CD8-positive, alpha-beta T cell (primary cell): ENCODE measurements at regions of chr3 and their contacts with region 1.

Region 1: DNA sequence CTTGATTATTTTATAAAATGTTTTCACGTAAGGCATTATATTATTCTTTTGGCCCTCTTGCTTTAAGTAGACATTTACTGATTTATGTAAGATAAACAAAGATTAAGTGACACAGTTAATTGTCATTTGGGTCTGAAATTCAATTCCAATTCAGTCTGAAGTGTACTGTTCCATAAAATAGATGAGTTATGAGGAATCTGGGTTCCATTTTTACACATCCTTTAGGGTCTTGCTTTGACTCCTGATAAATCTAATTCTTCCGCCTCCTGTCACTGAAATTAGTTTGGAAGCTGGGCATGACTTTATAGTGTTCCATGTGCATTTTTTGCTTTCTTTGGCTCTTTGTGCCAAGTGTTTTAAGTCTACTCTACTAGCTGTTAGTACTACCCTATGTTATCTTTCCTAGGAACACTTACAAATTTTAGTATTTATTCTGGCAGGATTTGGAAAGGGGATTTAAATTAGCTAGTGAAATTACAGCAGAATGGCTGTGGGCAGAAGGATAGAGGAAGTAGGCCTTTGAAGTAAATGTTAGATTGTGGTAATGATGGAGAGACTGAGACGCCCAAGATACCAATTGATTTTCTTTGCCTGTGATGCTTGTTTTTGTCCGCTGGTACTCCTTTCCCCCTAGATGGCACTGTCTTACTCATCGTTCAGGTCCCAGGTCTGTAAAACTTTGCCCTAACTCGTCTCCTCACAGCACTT is 14.3 kb downstream of the ARL8B start:
- DNase-seq: peak in 6 of 9 experiments; percentile 15 to 77 (median 34)
- ATAC-seq: peak; percentile 94
- H3K4me3 ChIP-seq: no peak overlapping the region
- H3K4me3 Mint-ChIP-seq: no peak overlapping the region
- H3K27ac ChIP-seq: peak overlapping the region in 1 of 2 experiments; percentile 47
- H3K27ac Mint-ChIP-seq: peak overlapping the region; percentile 4
- H3K4me1 ChIP-seq: peaks cover 21% of the 10 kb centered on the region
- H3K4me1 Mint-ChIP-seq: peaks cover 76% of the 10 kb centered on the region
- H3K27me3 ChIP-seq: no peaks in the 10 kb centered on the region
- H3K27me3 Mint-ChIP-seq: no peaks in the 10 kb centered on the region
- CTCF ChIP-seq: peak; percentile 70

Region 2: GRCh38 chr3:5092018-5092417 is 44.3 kb before region 1 on chr3:
- CTCF ChIA-PET with region 1: no interaction called
- POLR2A ChIA-PET with region 1: no interaction called
- intact Hi-C with region 1: no loop called
- DNase-seq: no peak
- ATAC-seq: no peak
- H3K4me3 ChIP-seq: no peak overlapping the region
- H3K4me3 Mint-ChIP-seq: no peak overlapping the region
- H3K27ac ChIP-seq: no peak overlapping the region
- H3K27ac Mint-ChIP-seq: no peak overlapping the region
- H3K4me1 ChIP-seq: no peaks in the 10 kb centered on the region
- H3K4me1 Mint-ChIP-seq: peaks cover 5% of the 10 kb centered on the region
- H3K27me3 ChIP-seq: peaks cover 0 to 11% of the 10 kb centered on the region in 2 experiments
- H3K27me3 Mint-ChIP-seq: peaks cover 21% of the 10 kb centered on the region
- CTCF ChIP-seq: no peak

Region 3: DNA sequence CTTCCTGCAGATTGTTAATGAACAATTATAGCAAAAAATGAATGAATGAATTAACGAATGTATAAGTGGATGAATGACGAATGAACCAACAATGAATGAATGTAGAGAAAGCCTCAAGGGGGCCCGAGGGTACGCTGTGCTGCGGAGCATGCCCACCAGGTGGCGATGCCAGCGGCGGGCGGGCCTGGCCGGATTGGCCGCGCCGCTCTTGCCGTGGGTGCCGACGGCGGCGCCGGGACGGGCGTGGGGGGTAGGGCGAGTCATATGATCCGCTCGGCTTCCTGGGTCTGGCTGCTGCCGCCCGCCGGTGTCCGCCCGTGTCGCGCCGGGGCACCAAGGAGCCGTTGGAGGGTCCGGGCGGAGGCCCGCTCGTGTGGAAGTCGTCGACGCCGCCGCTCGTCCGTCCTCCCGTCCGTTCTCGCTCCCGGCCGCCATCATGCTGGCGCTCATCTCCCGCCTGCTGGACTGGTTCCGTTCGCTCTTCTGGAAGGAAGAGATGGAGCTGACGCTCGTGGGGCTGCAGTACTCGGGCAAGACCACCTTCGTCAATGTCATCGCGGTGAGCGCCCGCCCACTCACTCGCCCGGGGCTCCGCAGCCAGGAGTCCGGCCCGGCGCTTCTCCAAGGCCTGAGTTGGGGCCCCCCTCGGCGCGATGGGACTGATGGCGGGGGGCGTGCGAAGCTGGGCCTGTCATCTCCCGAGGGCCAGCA is 14.2 kb before region 1 on chr3 and contains the start of gene ARL8B:
- CTCF ChIA-PET with region 1: interaction called, 12 read pairs
- POLR2A ChIA-PET with region 1: no interaction called
- intact Hi-C with region 1: loop called in 1 of 2 experiments (anchors 1 kb)
- DNase-seq: peak; percentile 80 to 95 (median 91)
- ATAC-seq: peak; percentile 98
- H3K4me3 ChIP-seq: peak within 1 kb of the TSS; percentile 91 to 98
- H3K4me3 Mint-ChIP-seq: peak within 1 kb of the TSS; percentile 81
- H3K27ac ChIP-seq: peak within 1 kb of the TSS; percentile 87 to 92
- H3K27ac Mint-ChIP-seq: peak within 1 kb of the TSS; percentile 81
- H3K4me1 ChIP-seq: peaks cover 31% of the 10 kb centered on the region
- H3K4me1 Mint-ChIP-seq: peaks cover 38% of the 10 kb centered on the region
- H3K27me3 ChIP-seq: no peaks in the 10 kb centered on the region
- H3K27me3 Mint-ChIP-seq: no peaks in the 10 kb centered on the region
- CTCF ChIP-seq: peak; percentile 92
- total RNA-seq, gene ARL8B: 54.1 to 61.7 TPM

Region 4: GRCh38 chr3:5170975-5171374 is 34.6 kb after region 1 on chr3:
- CTCF ChIA-PET with region 1: interaction called, 5 read pairs
- POLR2A ChIA-PET with region 1: no interaction called
- intact Hi-C with region 1: loop called in 1 of 2 experiments (anchors 5 kb)
- DNase-seq: no peak
- ATAC-seq: no peak
- H3K4me3 ChIP-seq: no peak overlapping the region
- H3K4me3 Mint-ChIP-seq: no peak overlapping the region
- H3K27ac ChIP-seq: no peak overlapping the region
- H3K27ac Mint-ChIP-seq: no peak overlapping the region
- H3K4me1 ChIP-seq: no peaks in the 10 kb centered on the region
- H3K4me1 Mint-ChIP-seq: peaks cover 26% of the 10 kb centered on the region
- H3K27me3 ChIP-seq: no peaks in the 10 kb centered on the region
- H3K27me3 Mint-ChIP-seq: no peaks in the 10 kb centered on the region
- CTCF ChIP-seq: no peak

Region 5: GRCh38 chr3:5187156-5187919 is 51.0 kb after region 1 on chr3 and contains the start of gene EDEM1:
- CTCF ChIA-PET with region 1: interaction called, 5 read pairs
- POLR2A ChIA-PET with region 1: no interaction called
- intact Hi-C with region 1: loop called in 1 of 2 experiments (anchors 5 kb)
- DNase-seq: peak; percentile 85 to 98 (median 93)
- ATAC-seq: peak; percentile 82
- H3K4me3 ChIP-seq: peak within 1 kb of the TSS; percentile 84 to 92
- H3K4me3 Mint-ChIP-seq: peak within 1 kb of the TSS; percentile 100
- H3K27ac ChIP-seq: peak within 1 kb of the TSS; percentile 89 to 95
- H3K27ac Mint-ChIP-seq: peak within 1 kb of the TSS; percentile 100
- H3K4me1 ChIP-seq: peaks cover 27% of the 10 kb centered on the region
- H3K4me1 Mint-ChIP-seq: peaks cover 42% of the 10 kb centered on the region
- H3K27me3 ChIP-seq: no peaks in the 10 kb centered on the region
- H3K27me3 Mint-ChIP-seq: no peaks in the 10 kb centered on the region
- CTCF ChIP-seq: no peak
- total RNA-seq, gene EDEM1: 73.0 to 88.9 TPM

Region 6: GRCh38 chr3:5202222-5202621 is 65.9 kb after region 1 on chr3:
- CTCF ChIA-PET with region 1: interaction called, 4 read pairs
- POLR2A ChIA-PET with region 1: no interaction called
- intact Hi-C with region 1: loop called in 1 of 2 experiments (anchors 2 kb)
- DNase-seq: no peak
- ATAC-seq: no peak
- H3K4me3 ChIP-seq: no peak overlapping the region
- H3K4me3 Mint-ChIP-seq: no peak overlapping the region
- H3K27ac ChIP-seq: no peak overlapping the region
- H3K27ac Mint-ChIP-seq: peak overlapping the region; percentile 27
- H3K4me1 ChIP-seq: peaks cover 32% of the 10 kb centered on the region
- H3K4me1 Mint-ChIP-seq: peaks cover 35% of the 10 kb centered on the region
- H3K27me3 ChIP-seq: no peaks in the 10 kb centered on the region
- H3K27me3 Mint-ChIP-seq: no peaks in the 10 kb centered on the region
- CTCF ChIP-seq: no peak

Region 7: DNA sequence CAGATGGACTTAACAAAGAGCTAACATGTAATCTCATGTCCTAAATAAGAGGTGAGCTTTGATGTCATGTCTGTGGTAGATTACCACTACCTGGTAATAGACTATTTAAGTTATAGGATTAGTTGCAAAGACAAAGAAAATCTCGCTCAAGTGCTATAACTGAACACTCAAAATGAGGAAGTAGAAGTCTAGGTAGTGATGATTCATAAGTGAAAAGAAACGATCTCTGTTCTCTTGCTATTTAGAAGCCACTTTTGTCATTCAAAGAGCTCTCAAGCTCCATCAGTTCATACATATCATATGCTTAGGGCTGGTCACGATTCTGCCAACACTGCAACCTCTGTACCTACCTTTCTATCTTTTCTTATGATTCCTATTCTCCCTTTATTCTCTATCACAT is 162.1 kb after region 1 on chr3:
- CTCF ChIA-PET with region 1: interaction called, 4 read pairs
- POLR2A ChIA-PET with region 1: no interaction called
- intact Hi-C with region 1: loop called in 1 of 2 experiments (anchors 10 kb)
- DNase-seq: no peak
- ATAC-seq: no peak
- H3K4me3 ChIP-seq: no peak overlapping the region
- H3K4me3 Mint-ChIP-seq: no peak overlapping the region
- H3K27ac ChIP-seq: no peak overlapping the region
- H3K27ac Mint-ChIP-seq: no peak overlapping the region
- H3K4me1 ChIP-seq: no peaks in the 10 kb centered on the region
- H3K4me1 Mint-ChIP-seq: peaks cover 3% of the 10 kb centered on the region
- H3K27me3 ChIP-seq: no peaks in the 10 kb centered on the region
- H3K27me3 Mint-ChIP-seq: peaks cover under 1% of the 10 kb centered on the region
- CTCF ChIP-seq: no peak

Region 8: DNA sequence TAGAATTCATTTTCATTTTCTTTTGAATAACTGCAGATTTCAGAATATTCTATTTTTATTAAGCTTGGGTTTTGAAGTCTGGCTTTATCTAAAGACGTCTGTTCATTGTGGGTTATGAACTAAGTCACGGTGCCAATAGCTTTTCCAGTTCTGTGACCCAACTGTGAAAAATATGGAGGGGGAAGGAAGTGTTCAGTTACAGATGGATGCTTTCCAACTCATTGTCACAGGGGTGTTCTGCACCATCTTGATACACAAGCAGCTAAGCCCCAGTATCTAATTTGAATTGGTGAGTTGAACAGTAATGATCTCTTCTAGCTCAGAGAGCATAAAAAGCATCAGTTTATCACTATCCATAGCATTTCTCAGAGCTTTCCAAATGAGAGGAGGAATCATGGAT is 761.7 kb after region 1 on chr3:
- CTCF ChIA-PET with region 1: no interaction called
- POLR2A ChIA-PET with region 1: no interaction called
- intact Hi-C with region 1: loop called in 1 of 2 experiments (anchors 10 kb)
- DNase-seq: no peak
- ATAC-seq: no peak
- H3K4me3 ChIP-seq: no peak overlapping the region
- H3K4me3 Mint-ChIP-seq: no peak overlapping the region
- H3K27ac ChIP-seq: no peak overlapping the region
- H3K27ac Mint-ChIP-seq: no peak overlapping the region
- H3K4me1 ChIP-seq: no peaks in the 10 kb centered on the region
- H3K4me1 Mint-ChIP-seq: no peaks in the 10 kb centered on the region
- H3K27me3 ChIP-seq: no peaks in the 10 kb centered on the region
- H3K27me3 Mint-ChIP-seq: no peaks in the 10 kb centered on the region
- CTCF ChIP-seq: no peak